Activated CD4-positive, alpha-beta T cell treated with anti-CD3 and anti-CD28 coated beads for 36 hours (primary cell): ENCODE measurements at regions of chr5 and their contacts with region 1.

Region 1: GRCh38 chr5:154445422-154446182 is at the start of gene SAP30L:
- DNase-seq: peak; percentile 96
- ATAC-seq: peak; percentile 97
- H3K4me3 Mint-ChIP-seq: peak within 1 kb of the TSS; percentile 98
- H3K27ac Mint-ChIP-seq: peak within 1 kb of the TSS; percentile 96
- H3K4me1 Mint-ChIP-seq: peaks cover 40% of the 10 kb centered on the region
- H3K27me3 Mint-ChIP-seq: no peaks in the 10 kb centered on the region
- total RNA-seq, gene SAP30L: 22.1 to 24.5 TPM

Region 2: DNA sequence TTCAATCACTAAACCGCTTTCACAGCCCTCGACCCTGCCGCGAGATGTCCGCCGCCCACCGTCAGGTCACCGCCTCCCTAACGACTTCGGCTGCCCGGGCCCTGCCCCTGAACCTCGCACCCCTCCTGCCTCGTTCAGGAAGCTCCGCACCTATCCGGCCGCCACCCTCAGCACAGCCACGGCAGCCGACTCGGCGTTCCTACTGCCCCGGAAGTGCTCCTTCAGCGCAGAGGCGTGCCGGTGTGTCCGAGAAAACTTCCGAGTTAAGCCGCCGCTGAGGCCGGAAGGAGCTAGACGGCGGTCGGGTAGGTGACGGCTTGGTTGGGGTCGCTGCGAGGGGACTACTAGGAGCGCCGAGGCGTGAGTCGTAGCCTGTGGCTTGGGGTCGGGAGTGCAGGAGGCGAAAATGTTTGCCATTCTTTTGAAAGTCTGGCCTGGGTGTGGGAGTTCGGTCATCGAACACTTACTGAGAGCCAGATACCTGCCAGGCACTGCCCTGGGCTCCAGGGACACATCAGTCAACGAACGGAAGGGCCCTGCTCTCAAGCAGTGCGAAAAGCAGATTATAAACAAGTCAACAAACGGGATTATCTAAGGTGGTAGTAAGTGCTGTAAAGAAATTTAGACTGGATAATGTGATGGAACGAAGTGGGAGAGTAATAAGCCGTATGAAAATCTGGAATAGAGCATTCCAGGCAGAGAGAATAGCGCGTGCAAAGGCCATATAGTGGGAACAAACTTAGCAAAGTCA is 406.7 kb before region 1 on chr5 and contains the starts of genes FAM114A2 and MFAP3:
- CTCF ChIA-PET with region 1: no interaction called
- POLR2A ChIA-PET with region 1: no interaction called
- intact Hi-C with region 1: loop called (anchors 1 to 2 kb)
- DNase-seq: peak; percentile 94
- ATAC-seq: peak; percentile 99
- H3K4me3 Mint-ChIP-seq: peak within 1 kb of the TSS; percentile 100
- H3K27ac Mint-ChIP-seq: peak within 1 kb of the TSS; percentile 92
- H3K4me1 Mint-ChIP-seq: peaks cover 55% of the 10 kb centered on the region
- H3K27me3 Mint-ChIP-seq: no peaks in the 10 kb centered on the region
- total RNA-seq, gene FAM114A2: 27.9 to 28.5 TPM
- total RNA-seq, gene MFAP3: 13.2 to 13.5 TPM

Region 3: DNA sequence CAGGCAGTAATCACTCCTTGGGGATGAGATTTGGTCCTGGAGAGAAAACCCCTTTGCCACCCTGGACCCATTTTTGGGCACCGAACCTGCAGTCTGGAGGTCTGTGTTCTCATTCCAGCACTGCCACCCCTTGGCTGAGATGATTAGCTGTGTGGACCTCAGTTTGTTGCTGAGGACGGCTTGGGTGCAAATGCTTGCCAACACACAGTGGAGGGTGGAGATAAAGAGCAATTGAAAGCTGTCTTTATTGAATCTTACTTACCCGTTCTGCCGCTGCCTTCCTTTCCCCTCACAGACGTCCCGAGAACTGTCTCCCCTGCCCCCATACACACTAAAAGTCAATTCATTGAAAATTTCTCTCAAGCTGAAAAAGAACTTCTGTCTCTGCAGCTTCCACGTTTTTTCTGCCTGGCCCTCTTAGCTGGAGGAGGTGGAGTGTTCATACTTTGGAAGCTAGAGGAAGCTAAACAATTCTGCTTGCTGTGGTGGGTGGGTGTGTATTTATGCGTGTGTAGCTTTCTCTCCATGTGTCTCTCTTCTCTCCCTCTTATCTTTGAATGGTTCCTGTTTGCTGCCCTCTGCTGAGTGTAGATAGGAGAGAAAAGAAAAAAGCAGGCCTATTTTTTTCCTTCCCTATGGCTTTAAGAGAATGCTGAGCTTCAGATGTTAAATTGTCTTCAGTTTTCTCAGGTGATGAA is 248.5 kb before region 1 on chr5:
- CTCF ChIA-PET with region 1: no interaction called
- POLR2A ChIA-PET with region 1: no interaction called
- intact Hi-C with region 1: loop called in 1 of 2 experiments (anchors 5 kb)
- DNase-seq: peak; percentile 35
- ATAC-seq: no peak
- H3K4me3 Mint-ChIP-seq: peak overlapping the region; percentile 35
- H3K27ac Mint-ChIP-seq: peak overlapping the region; percentile 90
- H3K4me1 Mint-ChIP-seq: peaks cover 71% of the 10 kb centered on the region
- H3K27me3 Mint-ChIP-seq: no peaks in the 10 kb centered on the region

Region 4: GRCh38 chr5:154940772-154941620 is 495.4 kb after region 1 on chr5 and contains the start of gene MRPL22:
- CTCF ChIA-PET with region 1: no interaction called
- POLR2A ChIA-PET with region 1: no interaction called
- intact Hi-C with region 1: loop called in 1 of 2 experiments (anchors 2 kb)
- DNase-seq: peak; percentile 97
- ATAC-seq: peak; percentile 72
- H3K4me3 Mint-ChIP-seq: peak within 1 kb of the TSS; percentile 97
- H3K27ac Mint-ChIP-seq: peak within 1 kb of the TSS; percentile 96
- H3K4me1 Mint-ChIP-seq: peaks cover 40% of the 10 kb centered on the region
- H3K27me3 Mint-ChIP-seq: no peaks in the 10 kb centered on the region
- total RNA-seq, gene MRPL22: 77.2 to 86.7 TPM

Region 5: DNA sequence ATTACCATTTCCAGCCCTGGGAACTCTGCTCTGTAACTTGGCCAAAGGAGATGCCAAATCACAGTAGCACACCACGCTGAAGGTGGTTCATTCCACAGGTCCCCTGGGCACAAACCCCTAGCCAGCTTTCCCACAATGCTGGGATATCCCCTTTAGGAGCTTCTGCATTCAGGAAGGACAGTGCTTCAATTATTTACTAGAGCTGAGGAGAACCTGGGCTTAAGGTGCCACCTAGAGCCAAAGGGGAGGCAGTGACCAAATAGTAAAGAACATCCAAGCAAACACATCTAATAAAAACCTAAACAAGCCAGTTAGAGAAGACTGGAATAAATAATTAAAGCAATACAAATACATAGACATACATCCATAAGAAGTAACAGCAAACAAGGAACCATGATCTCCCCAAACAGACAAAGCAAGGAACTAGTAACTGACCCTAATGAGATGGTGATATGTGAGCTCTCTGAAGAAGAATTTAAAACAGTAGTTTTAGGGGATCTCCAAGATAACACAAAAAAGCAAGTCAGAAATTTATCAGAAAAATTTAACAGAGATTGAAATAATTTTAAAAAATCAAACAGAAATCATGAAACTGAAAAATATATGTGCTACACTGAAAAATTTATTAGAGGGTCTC is 582.5 kb after region 1 on chr5:
- CTCF ChIA-PET with region 1: no interaction called
- POLR2A ChIA-PET with region 1: no interaction called
- intact Hi-C with region 1: no loop called
- DNase-seq: no peak
- ATAC-seq: no peak
- H3K4me3 Mint-ChIP-seq: no peak overlapping the region
- H3K27ac Mint-ChIP-seq: no peak overlapping the region
- H3K4me1 Mint-ChIP-seq: peaks cover 4% of the 10 kb centered on the region
- H3K27me3 Mint-ChIP-seq: peaks cover 9% of the 10 kb centered on the region